Posterior vena cava (tissue), 2 donors: ENCODE measurements at regions of chr3 and their contacts with region 1.

Region 1: GRCh38 chr3:42096796-42097565 is 5.8 kb downstream of the TRAK1 start:
- DNase-seq: peak; percentile 23

Region 2: GRCh38 chr3:41900265-41900664 is 196.7 kb before region 1 on chr3:
- intact Hi-C with region 1: loop called in 1 of 2 experiments (anchors 5 kb)
- DNase-seq: no peak

Region 3: DNA sequence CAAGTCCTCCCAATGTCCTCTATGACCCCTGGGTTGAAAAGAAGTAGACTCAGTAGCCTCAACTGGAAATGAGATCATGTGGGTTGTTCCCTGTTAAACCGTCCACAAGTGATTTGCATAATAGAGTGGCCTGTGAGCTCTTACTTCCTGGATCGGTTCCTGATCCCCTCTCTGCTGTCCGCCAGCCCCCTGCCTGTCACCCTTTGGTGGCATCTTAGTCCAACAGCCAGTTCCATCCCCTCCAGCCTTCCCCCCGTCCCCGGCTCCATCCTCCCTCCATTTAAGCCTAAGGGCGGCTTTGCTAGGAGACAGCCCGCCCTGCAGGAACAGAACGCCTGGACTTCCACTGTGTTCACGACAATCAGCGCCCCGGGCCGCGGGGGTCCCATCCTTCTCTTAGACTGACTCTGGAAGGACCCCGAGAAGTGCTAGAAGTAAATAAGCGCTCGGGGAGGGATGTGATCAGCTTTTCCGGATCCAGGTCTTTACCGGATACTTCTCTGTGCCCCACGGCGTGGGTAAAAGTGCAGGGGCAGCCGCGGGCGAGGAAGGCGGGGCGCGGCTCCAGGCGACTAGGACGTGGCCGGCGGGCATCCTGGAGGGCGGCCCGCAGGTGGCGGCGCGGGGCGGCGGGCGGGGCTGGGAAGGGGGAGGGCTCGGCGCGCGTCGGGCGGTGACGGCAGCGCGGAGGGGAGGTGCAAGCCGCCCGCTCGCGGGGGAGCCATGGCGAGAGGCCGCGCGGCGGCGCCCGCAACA is 83.9 kb before region 1 on chr3:
- intact Hi-C with region 1: loop called (anchors 2 to 5 kb)
- DNase-seq: peak; percentile 94

Region 4: DNA sequence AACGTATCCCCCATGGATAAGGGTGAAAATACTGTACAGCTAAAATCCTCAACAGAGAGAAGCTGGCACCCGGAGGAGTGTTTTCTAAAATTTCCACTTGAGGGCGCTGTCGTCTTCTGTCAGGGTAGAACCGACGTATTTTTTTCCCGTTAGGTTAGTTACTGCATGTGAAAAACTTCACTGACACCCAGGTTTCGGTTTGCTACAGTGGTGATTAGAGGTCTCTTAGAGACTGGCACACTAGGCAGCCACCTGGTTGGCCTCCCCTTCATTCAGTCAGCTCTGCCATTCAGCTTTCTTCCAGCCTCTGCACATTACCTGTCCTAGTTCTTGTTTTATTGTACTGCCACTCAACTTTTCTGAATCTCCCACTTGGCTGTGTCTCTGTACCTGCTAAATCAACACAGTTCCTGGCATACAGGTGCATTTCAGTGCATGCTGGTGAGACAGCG is 150.6 kb after region 1 on chr3:
- intact Hi-C with region 1: no loop called
- DNase-seq: no peak